BJ (cell line): ENCODE measurements at regions of chr5 and their contacts with region 1.

Region 1: DNA sequence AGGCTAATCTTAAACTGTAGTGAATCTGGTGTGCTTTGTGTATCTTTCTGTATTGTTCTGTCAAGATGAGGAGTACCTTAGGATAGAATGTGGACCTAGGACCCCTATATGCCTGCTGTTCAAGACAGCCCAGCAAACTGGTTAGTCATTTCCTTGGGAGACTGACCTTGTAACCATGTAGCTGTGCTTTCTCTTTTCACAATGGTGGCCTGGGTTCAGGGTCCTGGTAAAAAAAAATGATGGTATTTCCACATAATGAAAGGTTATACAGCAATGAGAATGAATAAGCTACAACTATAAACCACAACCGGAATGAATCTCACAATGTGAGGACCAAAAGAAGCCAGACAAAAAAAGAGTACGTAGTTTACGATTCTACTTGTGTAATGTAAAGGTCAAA is 36.4 kb upstream of the F2RL1 start:
- DNase-seq: no peak
- H3K4me3 ChIP-seq: no peak overlapping the region
- H3K27me3 ChIP-seq: no peaks in the 10 kb centered on the region; the same call in 1 of the 2 replicates
- CTCF ChIP-seq: no peak

Region 2: DNA sequence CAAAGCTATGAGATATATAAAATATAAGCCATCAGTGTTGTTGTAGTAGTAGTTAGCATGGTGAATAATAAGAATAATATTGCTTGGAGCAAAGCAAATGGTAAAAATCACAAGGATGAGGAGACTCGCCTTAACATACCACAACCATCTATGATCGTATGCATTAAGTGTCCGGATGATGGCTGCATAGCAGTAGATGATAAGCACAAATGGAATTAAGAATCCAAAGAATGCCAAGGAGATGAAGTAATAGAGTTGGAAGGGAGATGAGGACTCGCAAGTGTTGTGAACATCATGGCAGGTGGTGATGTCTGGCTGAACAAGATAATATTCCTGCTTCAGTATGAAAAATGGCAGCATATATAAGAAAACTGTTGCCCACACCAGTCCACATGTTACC is 164.8 kb before region 1 on chr5:
- CTCF ChIA-PET with region 1: no interaction called
- POLR2A ChIA-PET with region 1: interaction called, 10 read pairs
- DNase-seq: peak; percentile 43
- H3K4me3 ChIP-seq: no peak overlapping the region
- H3K27me3 ChIP-seq: no peaks in the 10 kb centered on the region
- CTCF ChIP-seq: no peak

Region 3: GRCh38 chr5:76859591-76860247 is 77.3 kb after region 1 on chr5:
- CTCF ChIA-PET with region 1: no interaction called
- POLR2A ChIA-PET with region 1: no interaction called
- DNase-seq: no peak
- H3K4me3 ChIP-seq: no peak overlapping the region
- H3K27me3 ChIP-seq: peaks cover 1% of the 10 kb centered on the region; the same call in 1 of the 2 replicates
- CTCF ChIP-seq: no peak